ENCODE measurements at regions of chr17 and their contacts with region 1.

Region 1: DNA sequence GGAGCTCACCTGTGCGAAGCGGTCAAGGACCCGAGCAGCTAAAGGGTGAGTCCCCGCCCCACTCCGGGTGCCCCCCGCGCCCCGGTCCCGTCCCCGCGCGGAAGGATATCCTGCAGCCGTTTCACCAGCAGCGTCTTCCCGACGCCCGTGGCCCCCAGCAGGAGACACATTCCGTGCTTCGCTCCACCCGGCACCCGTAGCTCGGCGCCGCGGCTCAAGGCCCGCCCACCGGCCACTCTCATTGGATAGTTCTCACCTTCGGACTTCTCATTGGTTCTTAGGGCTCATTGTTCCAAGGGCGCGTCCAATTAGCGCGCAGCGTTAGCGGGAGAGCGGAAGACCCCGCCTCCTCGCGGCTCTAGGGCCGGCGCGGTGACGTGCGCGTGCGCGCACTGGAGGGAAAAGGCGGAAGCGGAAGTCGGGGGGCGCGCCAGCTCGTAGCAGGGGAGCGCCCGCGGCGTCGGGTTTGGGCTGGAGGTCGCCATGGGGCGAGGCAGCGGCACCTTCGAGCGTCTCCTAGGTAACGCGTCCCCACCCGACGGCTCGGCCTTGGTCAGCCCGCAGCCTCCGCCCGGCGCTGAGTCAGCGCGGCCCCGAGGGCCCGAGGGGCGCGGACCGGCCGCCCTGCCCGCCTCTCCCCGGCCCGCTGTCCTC is at the starts of genes ARL16 and HGS:
- DNase-seq: peak; percentile 94 to 99 (median 96)
- ATAC-seq: peak; percentile 99
- H3K4me3 ChIP-seq: peak within 1 kb of the TSS; percentile 98
- H3K4me3 Mint-ChIP-seq: peak within 1 kb of the TSS; percentile 100
- H3K27ac ChIP-seq: peak within 1 kb of the TSS; percentile 67 to 69
- H3K27ac Mint-ChIP-seq: peak within 1 kb of the TSS; percentile 81
- H3K4me1 ChIP-seq: peaks cover 51% of the 10 kb centered on the region
- H3K4me1 Mint-ChIP-seq: peaks cover 24% of the 10 kb centered on the region
- H3K27me3 ChIP-seq: no peaks in the 10 kb centered on the region
- H3K27me3 Mint-ChIP-seq: no peaks in the 10 kb centered on the region
- CTCF ChIP-seq: no peak
- total RNA-seq, gene ARL16: 35.7 to 38.5 TPM
- total RNA-seq, gene HGS: 118 to 127 TPM

Region 2: DNA sequence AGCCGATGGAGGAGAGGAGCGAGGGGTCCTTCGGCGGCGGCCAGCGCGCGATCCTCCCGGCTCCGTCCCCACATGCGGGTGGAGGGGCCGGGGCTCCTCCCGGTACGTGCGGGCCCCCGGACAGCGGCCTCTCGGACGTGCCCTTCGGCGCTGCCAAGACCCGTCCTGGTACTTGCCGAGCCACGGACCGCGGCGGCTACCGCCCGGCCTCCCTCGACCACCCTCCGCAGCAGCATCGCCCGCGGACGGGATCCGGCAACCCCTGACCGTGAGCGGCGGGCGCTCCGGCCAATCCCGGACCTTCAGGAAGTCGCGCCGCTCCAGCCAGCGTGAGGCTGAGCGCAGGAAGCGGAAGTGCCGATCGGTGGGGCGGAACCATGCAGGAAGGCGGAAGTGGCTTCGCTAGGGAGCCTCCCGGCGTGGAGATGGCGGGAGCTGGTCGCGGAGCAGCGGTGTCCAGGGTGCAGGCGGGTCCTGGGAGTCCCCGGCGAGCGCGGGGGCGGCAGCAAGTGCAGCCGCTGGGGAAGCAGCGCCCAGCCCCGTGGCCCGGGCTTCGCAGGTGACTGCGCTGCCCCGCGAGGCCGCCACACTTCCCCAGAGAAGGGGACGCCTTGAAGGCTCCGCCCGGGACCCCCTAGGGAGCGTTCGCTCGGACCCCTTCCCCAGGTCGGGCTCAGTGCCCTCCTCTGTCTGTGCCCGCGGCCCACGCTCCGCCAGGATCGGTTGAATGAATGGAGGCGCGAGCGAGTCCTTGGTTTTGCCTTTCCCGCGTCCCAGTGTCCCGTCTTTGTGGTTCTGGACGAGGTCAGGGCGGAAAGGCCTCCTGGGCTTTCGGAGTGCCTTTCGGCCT is 17.1 kb before region 1 on chr17 and contains the starts of genes CCDC137 and OXLD1:
- CTCF ChIA-PET with region 1: no interaction called
- POLR2A ChIA-PET with region 1: interaction called, 25 read pairs
- intact Hi-C with region 1: loop called in 1 of 2 experiments (anchors 1 kb)
- DNase-seq: peak; percentile 81 to 96 (median 91)
- ATAC-seq: peak; percentile 84
- H3K4me3 ChIP-seq: peak within 1 kb of the TSS; percentile 90
- H3K4me3 Mint-ChIP-seq: peak within 1 kb of the TSS; percentile 97
- H3K27ac ChIP-seq: peak within 1 kb of the TSS; percentile 73 to 85
- H3K27ac Mint-ChIP-seq: peak within 1 kb of the TSS; percentile 91
- H3K4me1 ChIP-seq: peaks cover 67% of the 10 kb centered on the region
- H3K4me1 Mint-ChIP-seq: peaks cover 50% of the 10 kb centered on the region
- H3K27me3 ChIP-seq: no peaks in the 10 kb centered on the region
- H3K27me3 Mint-ChIP-seq: no peaks in the 10 kb centered on the region
- CTCF ChIP-seq: no peak
- total RNA-seq, gene CCDC137: 20.8 to 21.7 TPM
- total RNA-seq, gene OXLD1: 24.6 to 25.3 TPM